HepG2 (cell line): ENCODE measurements at regions of chr11 and their contacts with region 1.

Region 1: DNA sequence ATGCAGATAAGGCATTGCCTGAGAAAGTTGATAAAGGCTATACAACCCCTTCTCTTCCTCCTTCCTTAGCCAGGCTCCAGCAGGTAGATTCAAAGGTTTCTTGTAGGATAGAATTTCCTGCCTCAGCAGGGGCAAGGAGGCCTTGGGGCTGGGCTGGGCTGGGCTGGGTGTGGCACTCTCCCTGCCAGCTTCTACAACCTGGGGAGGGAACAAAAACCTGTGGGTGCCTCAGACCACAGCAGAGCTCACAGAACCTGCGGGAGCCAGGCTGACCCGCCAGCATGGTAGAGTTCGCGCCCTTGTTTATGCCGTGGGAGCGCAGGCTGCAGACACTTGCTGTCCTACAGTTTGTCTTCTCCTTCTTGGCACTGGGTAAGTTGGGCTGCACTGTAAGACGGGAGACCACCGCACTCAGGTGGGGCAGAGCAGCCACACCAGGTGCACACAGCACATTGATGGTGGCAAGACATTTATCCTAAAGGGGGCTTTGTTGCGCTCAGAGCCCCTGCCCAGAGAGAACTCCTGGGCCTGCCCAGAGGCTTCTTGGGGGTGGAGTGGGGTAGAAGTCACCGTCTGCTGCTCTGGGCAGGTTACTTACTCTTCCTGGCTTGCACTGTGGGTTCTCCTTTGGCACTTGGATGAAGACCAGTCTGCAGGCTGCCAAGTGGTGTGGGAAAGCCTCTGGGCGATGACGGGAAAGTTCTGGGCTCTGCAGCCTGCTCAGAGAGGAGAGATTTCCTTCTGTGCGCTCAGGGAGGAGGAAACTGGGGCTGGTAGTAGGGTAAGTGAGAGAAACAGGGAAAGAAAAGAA is at the start of gene MOGAT2:
- DNase-seq: no peak
- ATAC-seq: no peak
- H3K4me3 ChIP-seq: peak within 1 kb of the TSS in 1 of 3 experiments; percentile 76; a peak in 2 of 6 replicates
- H3K27ac ChIP-seq: peak within 1 kb of the TSS; percentile 79
- H3K4me1 ChIP-seq: peaks cover 77% of the 10 kb centered on the region
- H3K27me3 ChIP-seq: no peaks in the 10 kb centered on the region
- CTCF ChIP-seq: no peak
- EP300 ChIP-seq: no peak
- POLR2A ChIP-seq: no peak
- RAD21 ChIP-seq: no peak
- total RNA-seq, gene MOGAT2: 27.2 and 27.8 TPM in 2 replicates

Region 2: DNA sequence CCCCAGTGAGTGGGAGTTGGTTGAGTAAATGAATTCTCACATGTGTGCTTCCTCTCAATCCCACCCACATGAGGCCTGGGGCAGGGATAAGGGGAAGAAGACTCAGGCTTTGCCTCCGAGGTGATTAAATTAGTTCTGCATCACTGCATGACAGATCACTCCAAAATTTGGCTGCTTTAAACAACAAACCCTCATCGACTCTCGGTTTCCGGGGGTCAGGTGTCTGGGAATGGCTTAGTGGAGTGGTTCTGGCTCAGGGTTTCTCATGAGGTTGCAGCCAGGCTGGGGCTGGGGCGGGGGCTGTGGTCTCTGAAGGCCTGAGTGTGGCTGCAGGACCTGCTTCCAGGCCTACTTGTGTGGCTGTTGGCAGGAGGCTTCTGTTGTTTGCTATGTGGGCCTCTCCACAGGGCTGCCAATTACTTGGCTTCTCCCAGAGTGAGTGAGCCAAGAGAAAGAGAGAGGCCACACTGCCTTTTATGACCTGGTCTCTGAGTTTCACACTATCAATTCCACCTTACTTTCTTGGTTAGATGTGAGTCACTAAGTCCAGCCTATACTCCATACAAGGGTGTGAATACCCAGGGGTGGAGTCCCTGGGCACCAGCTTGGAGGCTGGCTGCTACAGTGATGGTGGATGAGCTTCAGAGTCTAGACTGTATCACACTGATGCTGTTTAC is 15.8 kb after region 1 on chr11:
- CTCF ChIA-PET with region 1: no interaction called
- POLR2A ChIA-PET with region 1: interaction called, 12 read pairs
- in situ Hi-C with region 1: no loop called
- intact Hi-C with region 1: no loop called
- DNase-seq: no peak
- ATAC-seq: peak; percentile 26
- H3K4me3 ChIP-seq: no peak overlapping the region
- H3K27ac ChIP-seq: no peak overlapping the region
- H3K4me1 ChIP-seq: peaks cover 31% of the 10 kb centered on the region
- H3K27me3 ChIP-seq: no peaks in the 10 kb centered on the region
- CTCF ChIP-seq: no peak
- EP300 ChIP-seq: no peak
- POLR2A ChIP-seq: no peak
- RAD21 ChIP-seq: no peak

Region 3: GRCh38 chr11:75762885-75763284 is 45.1 kb after region 1 on chr11:
- CTCF ChIA-PET with region 1: interaction called, 19 read pairs
- POLR2A ChIA-PET with region 1: interaction called, 50 read pairs
- in situ Hi-C with region 1: loop called (anchors 5 kb)
- intact Hi-C with region 1: loop called (anchors 1 kb)
- DNase-seq: peak; percentile 88
- ATAC-seq: peak; percentile 78
- H3K4me3 ChIP-seq: no peak overlapping the region
- H3K27ac ChIP-seq: peak overlapping the region; percentile 61
- H3K4me1 ChIP-seq: peaks cover 87% of the 10 kb centered on the region
- H3K27me3 ChIP-seq: no peaks in the 10 kb centered on the region
- CTCF ChIP-seq: no peak
- EP300 ChIP-seq: peak; percentile 73 to 94; a peak in 3 of 4 replicates
- POLR2A ChIP-seq: no peak
- RAD21 ChIP-seq: no peak

Region 4: GRCh38 chr11:75797792-75798191 is 80.0 kb after region 1 on chr11:
- CTCF ChIA-PET with region 1: no interaction called
- POLR2A ChIA-PET with region 1: interaction called, 10 read pairs
- in situ Hi-C with region 1: no loop called
- intact Hi-C with region 1: no loop called
- DNase-seq: no peak
- ATAC-seq: no peak
- H3K4me3 ChIP-seq: no peak overlapping the region
- H3K27ac ChIP-seq: no peak overlapping the region
- H3K4me1 ChIP-seq: peaks cover 61% of the 10 kb centered on the region
- H3K27me3 ChIP-seq: no peaks in the 10 kb centered on the region
- CTCF ChIP-seq: no peak
- EP300 ChIP-seq: no peak
- POLR2A ChIP-seq: no peak
- RAD21 ChIP-seq: no peak

Region 5: GRCh38 chr11:75867775-75868374 is 150.1 kb after region 1 on chr11:
- CTCF ChIA-PET with region 1: interaction called, 12 read pairs
- POLR2A ChIA-PET with region 1: no interaction called
- in situ Hi-C with region 1: loop called (anchors 5 kb)
- intact Hi-C with region 1: loop called (anchors 1 kb)
- DNase-seq: peak; percentile 43
- ATAC-seq: peak; percentile 47; the same call in 2 of the 3 replicates
- H3K4me3 ChIP-seq: no peak overlapping the region
- H3K27ac ChIP-seq: no peak overlapping the region
- H3K4me1 ChIP-seq: no peaks in the 10 kb centered on the region
- H3K27me3 ChIP-seq: no peaks in the 10 kb centered on the region
- CTCF ChIP-seq: peak; percentile 71
- EP300 ChIP-seq: no peak
- POLR2A ChIP-seq: no peak
- RAD21 ChIP-seq: peak; percentile 68